ENCODE measurements at regions of chr4 and their contacts with region 1.

Region 1: DNA sequence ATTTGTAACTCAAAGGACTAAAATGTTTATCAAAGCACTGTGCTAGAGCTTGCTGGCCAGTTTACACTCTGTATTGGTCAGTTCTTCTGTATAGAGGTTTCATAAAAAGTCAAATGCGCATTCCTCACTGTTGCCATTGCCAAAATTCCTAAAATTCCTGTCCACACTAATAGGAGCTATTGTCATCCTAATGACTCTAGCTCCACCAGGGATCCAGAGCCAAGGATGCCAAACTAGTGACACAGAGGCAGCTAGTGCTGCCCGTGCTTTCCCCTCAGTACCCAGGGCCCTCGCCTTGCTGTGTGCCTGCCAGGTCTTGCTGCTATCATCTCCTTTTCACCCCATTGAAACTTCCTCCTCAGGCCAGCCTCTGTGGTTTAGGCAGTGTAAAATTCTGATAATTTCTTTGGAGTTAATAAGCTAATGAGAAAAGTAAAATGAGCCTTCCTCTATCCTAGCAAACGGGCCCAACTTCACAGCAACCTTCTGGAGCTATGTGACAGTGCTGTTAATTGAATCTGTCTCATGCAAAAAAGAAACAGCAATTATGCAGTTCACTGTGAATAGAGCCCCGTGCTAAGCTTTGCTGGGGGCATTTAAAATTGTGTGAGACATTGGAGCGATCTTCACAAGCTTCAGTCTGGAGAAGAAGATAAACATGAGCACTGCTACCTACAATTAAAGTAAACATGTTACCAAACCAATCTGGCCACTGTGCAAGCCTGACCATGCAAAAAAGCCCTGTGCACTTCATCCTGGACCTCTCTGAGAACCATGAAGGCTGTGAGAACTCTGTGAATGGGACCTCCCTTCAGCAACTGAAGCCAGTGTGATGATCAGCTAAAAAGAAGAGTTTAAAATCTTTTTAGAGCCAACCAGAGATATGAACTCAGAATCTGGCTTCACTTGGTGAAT is 43.1 kb upstream of the FGF2 start:
- DNase-seq: peak; percentile 78
- ATAC-seq: peak; percentile 98
- H3K4me3 Mint-ChIP-seq: peak overlapping the region; percentile 51
- H3K27ac Mint-ChIP-seq: peak overlapping the region; percentile 100
- H3K4me1 Mint-ChIP-seq: peaks cover 82% of the 10 kb centered on the region
- H3K27me3 Mint-ChIP-seq: no peaks in the 10 kb centered on the region
- CTCF ChIP-seq: no peak

Region 2: DNA sequence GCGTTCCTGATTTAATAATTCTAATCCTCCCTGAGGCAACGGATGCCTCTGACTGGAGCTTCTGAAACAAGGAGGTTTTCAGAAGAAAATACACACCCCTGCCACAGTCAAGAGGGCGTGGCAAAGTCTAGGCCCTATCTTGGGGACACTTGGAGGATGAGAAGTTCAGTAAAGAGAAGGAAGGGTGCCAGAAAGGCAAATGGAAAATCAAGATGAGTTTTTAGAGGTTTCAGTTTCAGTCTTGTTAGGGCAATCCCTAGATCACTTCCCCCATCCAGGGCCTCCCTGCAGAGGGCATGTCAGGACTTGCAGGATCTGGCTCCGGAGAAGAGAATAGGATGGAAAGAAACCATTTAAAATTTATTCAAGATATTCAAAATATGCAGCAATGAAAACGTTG is 14.5 kb after region 1 on chr4:
- CTCF ChIA-PET with region 1: interaction called, 9 read pairs
- POLR2A ChIA-PET with region 1: interaction called, 43 read pairs
- DNase-seq: peak; percentile 41
- ATAC-seq: peak; percentile 55
- H3K4me3 Mint-ChIP-seq: peak overlapping the region; percentile 28
- H3K27ac Mint-ChIP-seq: peak overlapping the region; percentile 99
- H3K4me1 Mint-ChIP-seq: peaks cover 49% of the 10 kb centered on the region
- H3K27me3 Mint-ChIP-seq: no peaks in the 10 kb centered on the region
- CTCF ChIP-seq: no peak